Naive thymus-derived CD4-positive, alpha-beta T cell (primary cell): ENCODE measurements at regions of chr1 and their contacts with region 1.

Region 1: DNA sequence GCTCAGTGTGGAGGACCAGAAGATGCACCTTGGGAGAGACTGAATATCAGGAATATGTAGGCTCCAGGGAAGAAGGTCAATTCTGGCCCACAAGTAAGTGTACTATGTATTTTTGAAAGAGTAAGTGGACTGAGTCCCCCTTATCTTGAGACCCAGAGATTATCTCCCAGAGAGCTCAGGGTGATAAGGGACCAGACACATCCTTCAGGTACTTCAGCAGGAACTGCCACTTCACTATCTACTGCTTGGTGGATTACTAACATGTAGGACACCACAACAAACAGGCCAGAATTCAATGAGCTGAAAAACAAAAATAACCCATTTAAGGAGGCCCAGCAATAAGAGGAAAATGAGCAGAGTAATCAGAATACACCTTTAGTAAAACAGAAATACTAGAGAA is 119.2 kb downstream of the ZNF644 start:
- DNase-seq: no peak
- ATAC-seq: no peak
- H3K4me3 ChIP-seq: no peak overlapping the region
- H3K4me3 Mint-ChIP-seq: no peak overlapping the region
- H3K27ac ChIP-seq: no peak overlapping the region
- H3K27ac Mint-ChIP-seq: no peak overlapping the region
- H3K4me1 ChIP-seq: no peaks in the 10 kb centered on the region
- H3K4me1 Mint-ChIP-seq: peaks cover 0 to 22% (median 8%) of the 10 kb centered on the region in 7 donors
- H3K27me3 ChIP-seq: no peaks in the 10 kb centered on the region
- H3K27me3 Mint-ChIP-seq: no peaks in the 10 kb centered on the region

Region 2: DNA sequence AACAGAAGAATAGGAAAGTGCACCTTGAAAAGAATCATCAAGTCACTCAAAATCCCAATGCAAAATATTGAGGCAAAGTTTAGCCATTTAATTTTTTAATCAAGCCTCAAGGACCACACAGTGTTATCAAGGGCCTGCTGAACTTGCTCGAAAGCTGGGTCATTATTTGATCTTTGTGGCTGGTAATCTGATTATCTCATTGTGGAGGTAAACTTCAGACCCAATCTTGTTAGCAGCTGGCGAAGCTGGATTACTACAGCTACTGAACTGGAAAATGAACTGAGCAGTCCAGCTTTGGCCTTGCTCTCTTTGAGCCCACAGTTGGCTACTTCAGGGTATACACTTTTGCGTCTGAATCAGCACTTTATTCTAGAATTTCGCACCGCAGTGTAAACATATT is 280.0 kb before region 1 on chr1:
- CTCF ChIA-PET with region 1: no interaction called
- POLR2A ChIA-PET with region 1: no interaction called
- intact Hi-C with region 1: no loop called
- DNase-seq: no peak
- ATAC-seq: no peak
- H3K4me3 ChIP-seq: no peak overlapping the region
- H3K4me3 Mint-ChIP-seq: no peak overlapping the region
- H3K27ac ChIP-seq: no peak overlapping the region
- H3K27ac Mint-ChIP-seq: no peak overlapping the region
- H3K4me1 ChIP-seq: no peaks in the 10 kb centered on the region
- H3K4me1 Mint-ChIP-seq: no peaks in the 10 kb centered on the region
- H3K27me3 ChIP-seq: no peaks in the 10 kb centered on the region
- H3K27me3 Mint-ChIP-seq: peaks cover 0 to 23% (median 7%) of the 10 kb centered on the region in 5 donors

Region 3: GRCh38 chr1:90919900-90920299 is 17.2 kb after region 1 on chr1:
- CTCF ChIA-PET with region 1: no interaction called
- POLR2A ChIA-PET with region 1: no interaction called
- intact Hi-C with region 1: loop called in 1 of 2 experiments (anchors 2 kb)
- DNase-seq: no peak
- ATAC-seq: no peak
- H3K4me3 ChIP-seq: no peak overlapping the region
- H3K4me3 Mint-ChIP-seq: peak overlapping the region in 6 of 10 donors; percentile 37 to 56 (median 52)
- H3K27ac ChIP-seq: no peak overlapping the region
- H3K27ac Mint-ChIP-seq: peak overlapping the region in 4 of 9 donors; percentile 11 to 51 (median 27)
- H3K4me1 ChIP-seq: peaks cover 9 to 21% of the 10 kb centered on the region in 2 donors
- H3K4me1 Mint-ChIP-seq: peaks cover 37 to 66% (median 63%) of the 10 kb centered on the region in 7 donors
- H3K27me3 ChIP-seq: no peaks in the 10 kb centered on the region
- H3K27me3 Mint-ChIP-seq: no peaks in the 10 kb centered on the region